HEK293T (cell line): ENCODE measurements at regions of chr7 and their contacts with region 1.

Region 1: GRCh38 chr7:155344600-155345433 is 47.1 kb downstream of the INSIG1 start:
- DNase-seq: peak; percentile 97

Region 2: GRCh38 chr7:154927624-154928143 is 417.1 kb before region 1 on chr7:
- CTCF ChIA-PET with region 1: interaction called, 11 read pairs
- POLR2A ChIA-PET with region 1: no interaction called
- DNase-seq: peak; percentile 66

Region 3: DNA sequence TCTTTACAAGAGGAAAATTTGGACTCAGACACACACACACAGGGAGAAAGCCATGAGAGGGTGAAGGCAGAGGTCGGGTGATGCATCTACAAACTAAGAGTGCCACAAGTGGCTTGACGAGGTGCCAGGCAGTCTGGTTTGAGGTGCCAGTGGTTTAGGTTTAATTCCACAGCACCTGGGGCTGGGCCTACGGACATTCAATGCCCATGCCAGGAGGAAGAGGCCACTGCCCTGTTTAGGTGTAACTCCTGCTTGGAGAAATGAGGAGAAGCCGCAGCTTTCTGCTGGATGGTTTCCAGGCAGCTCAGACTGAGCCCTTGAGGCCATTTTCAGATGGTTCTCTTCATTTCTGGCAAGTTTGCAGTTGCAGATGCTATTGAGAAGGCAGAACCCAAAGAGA is 191.1 kb before region 1 on chr7:
- CTCF ChIA-PET with region 1: no interaction called
- POLR2A ChIA-PET with region 1: no interaction called
- DNase-seq: no peak

Region 4: GRCh38 chr7:155190688-155191087 is 154.1 kb before region 1 on chr7:
- CTCF ChIA-PET with region 1: interaction called, 14 read pairs
- POLR2A ChIA-PET with region 1: no interaction called
- DNase-seq: peak; percentile 88

Region 5: GRCh38 chr7:155333346-155334234 is 11.2 kb before region 1 on chr7:
- CTCF ChIA-PET with region 1: interaction called, 21 read pairs
- POLR2A ChIA-PET with region 1: interaction called, 3 read pairs
- DNase-seq: no peak

Region 6: GRCh38 chr7:155356323-155357105 is 11.7 kb after region 1 on chr7:
- CTCF ChIA-PET with region 1: interaction called, 11 read pairs
- POLR2A ChIA-PET with region 1: interaction called, 4 read pairs
- DNase-seq: peak; percentile 68

Region 7: DNA sequence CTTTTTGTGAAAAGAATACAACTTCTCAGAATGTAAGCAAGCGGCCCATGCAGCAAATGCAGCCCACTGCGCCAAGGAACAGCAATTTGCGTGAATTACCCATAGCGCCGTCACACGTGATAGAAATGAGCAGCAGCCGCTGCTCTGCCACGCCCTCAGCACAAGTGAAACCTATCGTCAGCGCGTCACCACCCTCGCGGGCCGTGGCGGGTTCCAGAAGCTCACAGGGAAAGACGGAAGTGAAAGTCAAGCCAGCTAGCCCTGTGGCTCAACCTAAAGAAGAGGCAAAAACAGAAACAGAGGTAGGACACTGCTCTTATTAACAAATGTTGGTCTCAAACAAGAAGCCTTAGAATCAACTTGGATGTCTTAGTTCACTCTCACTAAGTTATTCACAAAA is 397.0 kb after region 1 on chr7:
- CTCF ChIA-PET with region 1: no interaction called
- POLR2A ChIA-PET with region 1: no interaction called
- DNase-seq: no peak